Activated naive CD8-positive, alpha-beta T cell treated with anti-CD3 and anti-CD28 coated beads, Interleukin-2, amount 10 ng/mL, durations not matched to agents 7 days and 5 days (primary cell): ENCODE measurements at regions of chr11 and their contacts with region 1.

Region 1: GRCh38 chr11:14643697-14644225 is at the start of gene PDE3B:
- DNase-seq: peak; percentile 84
- ATAC-seq: peak; percentile 76
- H3K4me3 Mint-ChIP-seq: peak within 1 kb of the TSS; percentile 92
- H3K27ac Mint-ChIP-seq: peak within 1 kb of the TSS; percentile 90
- H3K4me1 Mint-ChIP-seq: peaks cover 42% of the 10 kb centered on the region
- H3K27me3 Mint-ChIP-seq: no peaks in the 10 kb centered on the region
- total RNA-seq, gene PDE3B: 117 to 125 TPM

Region 2: GRCh38 chr11:14578541-14578956 is 65.2 kb before region 1 on chr11:
- POLR2A ChIA-PET with region 1: interaction called, 37 read pairs
- DNase-seq: no peak
- ATAC-seq: peak; percentile 97
- H3K4me3 Mint-ChIP-seq: peak overlapping the region; percentile 69
- H3K27ac Mint-ChIP-seq: peak overlapping the region; percentile 90
- H3K4me1 Mint-ChIP-seq: peaks cover 39% of the 10 kb centered on the region
- H3K27me3 Mint-ChIP-seq: no peaks in the 10 kb centered on the region

Region 3: DNA sequence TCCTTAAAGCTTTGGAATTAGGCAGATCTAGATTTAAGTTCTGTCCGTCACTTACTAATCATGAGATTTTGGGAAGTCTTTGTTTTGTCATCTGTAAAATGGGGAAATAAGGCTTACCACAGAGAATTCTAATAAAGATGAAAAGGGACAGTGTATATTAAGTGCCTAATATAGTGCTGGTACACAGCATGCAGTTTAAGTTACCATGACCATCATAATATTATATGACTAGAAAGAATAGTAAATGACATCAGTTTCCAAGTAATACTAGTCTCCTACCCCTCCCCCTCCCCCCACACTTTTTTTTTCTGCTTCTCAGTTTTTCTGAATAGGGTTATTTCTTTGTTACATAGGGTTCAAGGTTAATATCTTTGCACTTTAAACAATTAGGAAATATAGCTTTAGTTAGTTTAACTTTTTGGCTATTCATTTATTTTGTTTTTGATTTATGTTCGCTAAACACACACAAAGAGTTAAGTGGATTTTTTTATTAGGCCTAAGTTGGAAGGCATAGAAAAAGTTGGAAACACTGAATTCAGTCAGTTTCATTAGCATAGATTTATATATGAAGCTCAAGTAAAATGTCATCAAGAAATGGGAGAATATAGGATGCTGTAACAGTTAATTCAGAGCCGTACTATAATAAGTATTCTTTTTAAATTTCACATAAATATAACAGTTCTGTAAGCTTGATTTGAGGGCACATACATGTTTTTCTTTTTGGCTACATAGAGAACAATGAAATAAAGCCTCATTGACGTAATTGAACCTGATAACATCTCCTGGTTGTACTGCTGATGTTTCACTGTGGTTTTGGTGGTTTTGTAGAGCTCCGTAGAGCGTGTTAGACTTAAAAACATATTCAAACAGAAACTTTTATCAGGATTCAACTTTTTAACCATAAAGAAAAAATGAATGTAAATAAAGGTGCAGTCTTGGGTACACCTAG is 121.1 kb after region 1 on chr11:
- POLR2A ChIA-PET with region 1: interaction called, 65 read pairs
- DNase-seq: no peak
- ATAC-seq: peak; percentile 71
- H3K4me3 Mint-ChIP-seq: no peak overlapping the region
- H3K27ac Mint-ChIP-seq: no peak overlapping the region
- H3K4me1 Mint-ChIP-seq: peaks cover 35% of the 10 kb centered on the region
- H3K27me3 Mint-ChIP-seq: no peaks in the 10 kb centered on the region